Activated CD4-positive, alpha-beta T cell treated with anti-CD3 and anti-CD28 coated beads for 36 hours (primary cell): ENCODE measurements at regions of chr3 and their contacts with region 1.

Region 1: DNA sequence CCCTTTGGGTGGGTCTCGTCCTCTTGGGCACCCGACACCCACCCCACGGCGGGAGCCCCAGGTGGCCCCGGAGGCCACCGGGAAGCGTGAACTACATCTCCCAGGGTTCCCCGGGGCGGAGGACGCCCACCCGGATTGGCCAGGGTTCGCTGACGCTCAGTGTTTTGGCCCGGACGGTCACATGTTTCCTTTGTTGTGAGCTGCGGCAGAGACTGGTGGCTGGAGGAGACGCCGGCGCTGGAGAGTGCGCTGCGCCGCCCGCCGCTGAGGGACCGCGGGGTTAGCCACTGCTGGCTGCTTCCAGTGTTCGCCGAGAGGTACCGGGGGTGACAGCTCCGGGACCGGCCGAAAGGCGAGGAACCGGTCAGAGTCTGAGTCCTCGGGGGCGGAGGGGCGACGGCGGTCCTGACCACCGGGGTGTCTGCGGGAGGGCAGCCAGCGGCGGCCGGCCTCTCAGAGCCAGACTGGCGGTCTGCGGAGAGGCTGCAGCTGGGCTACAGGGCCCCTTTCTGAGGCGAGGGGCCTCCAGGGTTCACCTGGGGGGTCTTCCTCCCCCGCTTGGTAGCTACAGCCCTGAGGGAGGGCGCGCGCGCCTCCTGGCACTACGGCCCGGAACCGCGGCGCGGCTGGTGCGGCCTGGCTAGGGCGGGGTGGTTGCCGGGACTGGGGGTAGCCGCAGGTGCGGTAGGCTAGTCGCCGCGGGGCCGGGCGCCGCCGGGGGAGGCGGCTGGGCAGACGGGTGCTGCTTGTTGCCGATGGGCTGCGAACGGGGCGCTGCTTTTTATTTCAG is at the start of gene KLHL24:
- DNase-seq: peak; percentile 95
- ATAC-seq: peak; percentile 85
- H3K4me3 Mint-ChIP-seq: peak within 1 kb of the TSS; percentile 87
- H3K27ac Mint-ChIP-seq: peak within 1 kb of the TSS; percentile 92
- H3K4me1 Mint-ChIP-seq: peaks cover 36% of the 10 kb centered on the region
- H3K27me3 Mint-ChIP-seq: no peaks in the 10 kb centered on the region
- total RNA-seq, gene KLHL24: 9.6 to 15.8 TPM

Region 2: DNA sequence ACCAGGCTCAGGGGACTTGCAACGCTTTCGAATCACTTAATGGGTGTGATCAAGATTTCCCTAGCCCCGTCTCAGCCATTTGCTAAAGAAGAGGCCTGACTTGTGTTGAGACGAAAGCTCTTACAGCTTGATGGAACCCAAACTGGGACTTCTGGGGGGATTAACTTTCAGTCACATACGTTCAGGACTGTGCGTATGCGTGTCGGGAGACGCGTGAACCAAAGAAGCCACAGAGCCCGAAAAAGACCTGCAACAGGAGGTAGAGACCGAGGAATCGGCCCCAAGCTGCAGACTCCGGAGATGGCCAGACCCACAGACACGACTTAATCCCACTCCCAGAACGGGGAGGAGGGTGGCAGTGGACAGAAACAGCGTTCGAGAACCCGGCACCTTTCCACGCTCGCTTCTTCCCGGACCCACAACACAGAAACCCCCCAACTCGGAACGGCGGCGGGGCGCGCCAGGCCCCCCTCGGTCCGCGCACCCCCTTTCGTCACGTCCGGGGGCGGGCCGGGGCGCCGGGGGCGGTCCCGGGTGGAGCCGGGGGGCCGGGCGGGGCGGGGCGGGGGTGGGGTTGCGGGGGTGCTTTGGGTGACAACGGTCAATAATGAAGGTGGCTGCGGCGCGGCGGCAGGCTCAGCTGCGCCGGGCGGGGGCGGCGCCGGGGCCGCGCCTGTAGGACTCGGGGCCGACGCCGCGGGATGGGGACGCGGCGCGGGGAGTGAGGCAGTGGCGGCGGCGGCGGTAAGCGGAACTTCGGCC is 842.5 kb before region 1 on chr3 and contains the start of gene ATP11B:
- CTCF ChIA-PET with region 1: no interaction called
- POLR2A ChIA-PET with region 1: no interaction called
- intact Hi-C with region 1: loop called in 1 of 2 experiments (anchors 5 kb)
- DNase-seq: peak; percentile 85
- ATAC-seq: peak; percentile 43
- H3K4me3 Mint-ChIP-seq: peak within 1 kb of the TSS; percentile 96
- H3K27ac Mint-ChIP-seq: peak within 1 kb of the TSS; percentile 99
- H3K4me1 Mint-ChIP-seq: peaks cover 27% of the 10 kb centered on the region
- H3K27me3 Mint-ChIP-seq: no peaks in the 10 kb centered on the region
- total RNA-seq, gene ATP11B: 64.6 to 86.7 TPM

Region 3: GRCh38 chr3:183427876-183428446 is 207.7 kb before region 1 on chr3:
- CTCF ChIA-PET with region 1: no interaction called
- POLR2A ChIA-PET with region 1: interaction called, 3 read pairs
- intact Hi-C with region 1: loop called in 1 of 2 experiments (anchors 1 kb)
- DNase-seq: peak; percentile 57
- ATAC-seq: peak; percentile 21
- H3K4me3 Mint-ChIP-seq: peak overlapping the region; percentile 79
- H3K27ac Mint-ChIP-seq: no peak overlapping the region
- H3K4me1 Mint-ChIP-seq: peaks cover 43% of the 10 kb centered on the region
- H3K27me3 Mint-ChIP-seq: peaks cover 11% of the 10 kb centered on the region

Region 4: GRCh38 chr3:183697610-183698317 is 62.1 kb after region 1 on chr3 and contains the start of gene YEATS2:
- CTCF ChIA-PET with region 1: interaction called, 4 read pairs
- POLR2A ChIA-PET with region 1: interaction called, 19 read pairs
- intact Hi-C with region 1: loop called (anchors 1 kb)
- DNase-seq: peak; percentile 91
- ATAC-seq: peak; percentile 81
- H3K4me3 Mint-ChIP-seq: peak within 1 kb of the TSS; percentile 91
- H3K27ac Mint-ChIP-seq: peak within 1 kb of the TSS; percentile 89
- H3K4me1 Mint-ChIP-seq: peaks cover 31% of the 10 kb centered on the region
- H3K27me3 Mint-ChIP-seq: no peaks in the 10 kb centered on the region
- total RNA-seq, gene YEATS2: 59.4 to 73.9 TPM

Region 5: GRCh38 chr3:183959214-183959613 is 323.6 kb after region 1 on chr3:
- CTCF ChIA-PET with region 1: no interaction called
- POLR2A ChIA-PET with region 1: no interaction called
- intact Hi-C with region 1: no loop called
- DNase-seq: no peak
- ATAC-seq: peak; percentile 47
- H3K4me3 Mint-ChIP-seq: no peak overlapping the region
- H3K27ac Mint-ChIP-seq: no peak overlapping the region
- H3K4me1 Mint-ChIP-seq: peaks cover 2% of the 10 kb centered on the region
- H3K27me3 Mint-ChIP-seq: no peaks in the 10 kb centered on the region

Region 6: DNA sequence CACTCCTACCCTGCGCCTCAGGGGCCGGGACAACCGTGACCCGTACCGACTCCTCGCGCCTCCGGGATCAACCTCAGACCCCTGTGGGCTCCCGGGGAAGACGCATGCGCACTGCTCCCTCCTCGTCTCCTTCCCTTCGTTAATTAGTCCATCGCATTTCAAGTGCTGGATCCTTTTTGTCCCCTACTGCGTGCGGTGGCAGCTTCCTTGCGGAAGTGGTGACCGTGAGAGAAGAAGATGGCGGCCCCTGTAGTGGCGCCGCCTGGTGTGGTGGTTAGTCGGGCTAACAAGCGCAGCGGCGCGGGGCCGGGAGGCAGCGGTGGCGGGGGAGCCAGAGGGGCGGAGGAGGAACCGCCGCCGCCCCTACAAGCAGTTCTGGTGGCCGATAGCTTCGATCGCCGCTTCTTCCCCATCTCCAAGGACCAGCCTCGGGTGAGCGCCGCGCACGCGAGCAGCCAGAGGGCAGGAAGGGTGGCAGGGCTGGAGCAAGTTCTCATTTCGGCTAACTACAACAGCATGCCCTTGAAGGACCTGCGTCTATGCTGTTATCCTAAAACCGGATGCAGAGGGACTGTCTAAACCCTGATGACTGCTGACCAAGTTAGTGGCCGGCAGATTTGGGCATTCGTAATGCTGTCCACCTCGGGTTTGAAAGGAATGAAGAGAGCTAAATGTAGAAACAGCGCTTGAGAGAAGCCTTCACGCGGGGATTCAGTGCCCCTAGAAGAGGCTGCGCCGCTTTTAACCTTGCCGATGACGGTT is 499.7 kb after region 1 on chr3 and contains the start of gene EIF2B5:
- CTCF ChIA-PET with region 1: no interaction called
- POLR2A ChIA-PET with region 1: no interaction called
- intact Hi-C with region 1: loop called in 1 of 2 experiments (anchors 5 kb)
- DNase-seq: peak; percentile 93
- ATAC-seq: peak; percentile 90
- H3K4me3 Mint-ChIP-seq: peak within 1 kb of the TSS; percentile 97
- H3K27ac Mint-ChIP-seq: peak within 1 kb of the TSS; percentile 92
- H3K4me1 Mint-ChIP-seq: peaks cover 29% of the 10 kb centered on the region
- H3K27me3 Mint-ChIP-seq: no peaks in the 10 kb centered on the region
- total RNA-seq, gene EIF2B5: 46.4 to 60.6 TPM

Region 7: DNA sequence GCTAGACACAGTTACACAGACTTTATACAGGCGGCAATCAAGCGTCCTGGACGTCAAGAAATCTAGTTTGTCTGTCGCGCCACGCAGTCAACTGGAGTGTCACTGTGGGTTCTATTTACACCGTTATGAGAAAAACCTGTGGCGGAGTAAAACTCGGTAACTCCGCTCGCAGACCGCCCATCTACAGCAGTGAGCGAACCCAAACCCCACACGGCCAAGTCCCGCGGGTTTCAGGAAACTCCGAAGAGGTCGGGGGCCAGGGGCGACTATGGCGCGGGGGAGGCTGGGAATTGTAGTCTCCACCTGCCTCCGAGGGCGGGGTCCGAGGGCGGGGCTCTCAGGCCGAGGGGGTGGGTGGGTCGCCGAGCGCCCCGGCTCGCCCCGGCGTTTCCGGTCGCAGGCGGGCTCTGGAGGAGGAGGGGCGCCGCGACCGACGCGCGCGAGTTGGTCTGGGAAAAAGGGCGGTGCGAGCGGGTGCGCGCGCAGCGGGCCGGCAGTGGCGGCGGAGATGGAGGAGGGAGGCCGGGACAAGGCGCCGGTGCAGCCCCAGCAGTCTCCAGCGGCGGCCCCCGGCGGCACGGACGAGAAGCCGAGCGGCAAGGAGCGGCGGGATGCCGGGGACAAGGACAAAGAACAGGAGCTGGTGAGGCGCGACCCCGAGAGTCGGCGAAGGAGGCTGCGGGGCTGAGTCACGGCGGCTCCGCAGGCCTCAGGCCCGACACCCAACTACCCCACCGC is 663.3 kb after region 1 on chr3 and contains the start of gene PSMD2:
- CTCF ChIA-PET with region 1: no interaction called
- POLR2A ChIA-PET with region 1: no interaction called
- intact Hi-C with region 1: loop called in 1 of 2 experiments (anchors 1 kb)
- DNase-seq: peak; percentile 99
- ATAC-seq: peak; percentile 96
- H3K4me3 Mint-ChIP-seq: peak within 1 kb of the TSS; percentile 84
- H3K27ac Mint-ChIP-seq: peak within 1 kb of the TSS; percentile 81
- H3K4me1 Mint-ChIP-seq: peaks cover 19% of the 10 kb centered on the region
- H3K27me3 Mint-ChIP-seq: no peaks in the 10 kb centered on the region
- total RNA-seq, gene PSMD2: 207 to 236 TPM

Region 8: GRCh38 chr3:184362668-184363540 is 727.3 kb after region 1 on chr3:
- CTCF ChIA-PET with region 1: no interaction called
- POLR2A ChIA-PET with region 1: no interaction called
- intact Hi-C with region 1: loop called in 1 of 2 experiments (anchors 5 kb)
- DNase-seq: peak; percentile 97
- ATAC-seq: peak; percentile 91
- H3K4me3 Mint-ChIP-seq: peak overlapping the region; percentile 98
- H3K27ac Mint-ChIP-seq: peak overlapping the region; percentile 98
- H3K4me1 Mint-ChIP-seq: peaks cover 30% of the 10 kb centered on the region
- H3K27me3 Mint-ChIP-seq: no peaks in the 10 kb centered on the region